MCF 10A (cell line): ENCODE measurements at regions of chr1 and their contacts with region 1.

Region 1: GRCh38 chr1:75632350-75632949 is 21.5 kb upstream of the SLC44A5 start:
- DNase-seq: peak; percentile 58
- H3K4me3 Mint-ChIP-seq: no peak overlapping the region
- H3K27ac Mint-ChIP-seq: no peak overlapping the region
- H3K4me1 Mint-ChIP-seq: no peaks in the 10 kb centered on the region
- H3K27me3 Mint-ChIP-seq: peaks cover 20% of the 10 kb centered on the region
- CTCF ChIP-seq: peak; percentile 78

Region 2: DNA sequence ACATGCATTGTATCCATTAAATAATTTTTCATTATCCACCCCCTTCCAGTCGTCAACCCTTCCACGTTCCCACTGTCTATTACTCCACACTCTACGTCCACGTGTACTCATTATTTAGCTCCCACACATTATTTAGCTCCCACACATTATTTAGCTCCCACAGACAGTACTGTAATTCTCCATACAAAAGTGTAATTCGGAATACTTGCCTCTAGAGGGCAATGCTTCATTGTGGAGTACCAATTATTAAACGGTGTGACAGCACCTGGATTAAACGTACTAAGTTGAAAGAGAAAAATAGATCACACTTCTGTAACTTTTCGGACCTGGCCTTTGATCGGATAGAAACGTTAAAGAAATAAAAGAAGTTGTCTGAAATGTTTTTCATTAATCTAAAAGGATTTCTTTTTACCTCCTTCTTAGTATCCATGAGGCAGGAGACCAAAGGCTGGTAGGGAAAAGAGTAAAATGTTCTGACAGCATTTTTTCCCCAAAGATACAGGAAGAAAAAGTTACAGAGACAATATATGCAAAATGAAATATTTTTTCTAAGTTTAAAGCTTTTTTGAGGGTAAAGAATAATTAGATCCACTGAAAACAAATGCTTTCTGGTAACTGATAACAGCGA is 399.0 kb before region 1 on chr1:
- CTCF ChIA-PET with region 1: interaction called, 42 read pairs
- POLR2A ChIA-PET with region 1: no interaction called
- intact Hi-C with region 1: loop called (anchors 1 kb)
- DNase-seq: peak; percentile 62
- H3K4me3 Mint-ChIP-seq: no peak overlapping the region
- H3K27ac Mint-ChIP-seq: no peak overlapping the region
- H3K4me1 Mint-ChIP-seq: no peaks in the 10 kb centered on the region
- H3K27me3 Mint-ChIP-seq: peaks cover 6% of the 10 kb centered on the region
- CTCF ChIP-seq: peak; percentile 47

Region 3: GRCh38 chr1:75400716-75401115 is 231.7 kb before region 1 on chr1:
- CTCF ChIA-PET with region 1: interaction called, 11 read pairs
- POLR2A ChIA-PET with region 1: no interaction called
- intact Hi-C with region 1: no loop called
- DNase-seq: no peak
- H3K4me3 Mint-ChIP-seq: no peak overlapping the region
- H3K27ac Mint-ChIP-seq: no peak overlapping the region
- H3K4me1 Mint-ChIP-seq: no peaks in the 10 kb centered on the region
- H3K27me3 Mint-ChIP-seq: no peaks in the 10 kb centered on the region
- CTCF ChIP-seq: no peak

Region 4: DNA sequence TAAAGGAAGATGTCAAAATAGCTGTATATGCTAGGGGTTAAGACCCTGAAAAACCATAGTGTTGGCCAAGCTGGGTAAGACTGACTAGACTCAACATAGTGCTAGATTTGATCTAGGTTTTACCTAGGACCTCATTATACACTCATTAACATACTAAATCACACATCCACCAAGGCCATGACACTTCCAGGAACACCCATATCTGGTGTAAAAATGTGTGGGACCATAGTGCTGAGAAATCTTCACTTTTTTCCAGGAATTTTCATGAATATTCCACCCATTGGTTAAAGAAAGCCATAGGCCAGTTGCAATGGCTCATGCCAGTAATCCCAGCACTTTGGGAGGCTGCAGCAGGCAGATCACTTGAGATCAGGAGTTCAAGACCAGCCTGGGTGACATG is 58.1 kb after region 1 on chr1:
- CTCF ChIA-PET with region 1: no interaction called
- POLR2A ChIA-PET with region 1: no interaction called
- intact Hi-C with region 1: no loop called
- DNase-seq: no peak
- H3K4me3 Mint-ChIP-seq: no peak overlapping the region
- H3K27ac Mint-ChIP-seq: no peak overlapping the region
- H3K4me1 Mint-ChIP-seq: no peaks in the 10 kb centered on the region
- H3K27me3 Mint-ChIP-seq: no peaks in the 10 kb centered on the region
- CTCF ChIP-seq: no peak

Region 5: GRCh38 chr1:75712306-75712705 is 79.9 kb after region 1 on chr1:
- CTCF ChIA-PET with region 1: interaction called, 3 read pairs
- POLR2A ChIA-PET with region 1: no interaction called
- intact Hi-C with region 1: loop called (anchors 10 kb)
- DNase-seq: no peak
- H3K4me3 Mint-ChIP-seq: no peak overlapping the region
- H3K27ac Mint-ChIP-seq: no peak overlapping the region
- H3K4me1 Mint-ChIP-seq: peaks cover 5% of the 10 kb centered on the region
- H3K27me3 Mint-ChIP-seq: no peaks in the 10 kb centered on the region
- CTCF ChIP-seq: no peak